ENCODE measurements at regions of chr3 and their contacts with region 1.

Region 1: GRCh38 chr3:11803977-11804892 is 42.5 kb downstream of the TAMM41 start:
- DNase-seq: peak in 11 of 14 experiments; percentile 4 to 75 (median 17)
- ATAC-seq: peak; percentile 91
- H3K4me3 ChIP-seq: no peak overlapping the region
- H3K4me3 Mint-ChIP-seq: no peak overlapping the region
- H3K27ac ChIP-seq: no peak overlapping the region
- H3K27ac Mint-ChIP-seq: no peak overlapping the region
- H3K4me1 ChIP-seq: no peaks in the 10 kb centered on the region
- H3K4me1 Mint-ChIP-seq: peaks cover 10% of the 10 kb centered on the region
- H3K27me3 ChIP-seq: no peaks in the 10 kb centered on the region
- H3K27me3 Mint-ChIP-seq: no peaks in the 10 kb centered on the region
- CTCF ChIP-seq: peak; percentile 74

Region 2: DNA sequence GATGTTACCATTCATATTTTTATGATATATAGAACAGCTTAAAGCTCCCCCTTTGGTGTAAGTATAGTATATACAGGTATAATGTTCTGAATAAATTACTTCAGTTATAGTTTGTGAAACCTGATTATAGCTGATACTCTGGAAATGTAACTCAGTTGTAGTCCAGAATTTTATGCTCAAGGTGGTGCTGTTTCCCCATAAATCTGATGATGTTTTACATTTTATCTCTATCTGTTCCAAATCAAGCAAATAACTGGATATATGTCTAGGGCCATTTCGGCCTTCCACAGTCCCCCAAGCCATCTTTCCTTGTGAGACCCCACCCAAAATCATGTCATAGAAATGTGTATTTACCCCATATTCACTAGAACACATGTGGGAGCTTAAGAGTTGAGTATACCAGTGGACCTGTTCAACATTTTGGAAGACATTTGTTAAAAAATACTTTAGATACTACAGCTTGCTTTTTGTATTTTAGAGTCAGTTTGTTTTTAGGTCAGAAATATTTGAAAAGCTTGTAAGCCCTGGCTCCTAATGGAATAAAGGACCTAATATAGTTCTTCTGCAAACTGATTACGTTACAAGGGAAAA is 424.9 kb before region 1 on chr3:
- CTCF ChIA-PET with region 1: interaction called, 14 read pairs
- POLR2A ChIA-PET with region 1: no interaction called
- intact Hi-C with region 1: loop called (anchors 1 kb)
- DNase-seq: peak in 4 of 14 experiments; percentile 19 to 64 (median 52)
- ATAC-seq: peak; percentile 62
- H3K4me3 ChIP-seq: no peak overlapping the region
- H3K4me3 Mint-ChIP-seq: no peak overlapping the region
- H3K27ac ChIP-seq: no peak overlapping the region
- H3K27ac Mint-ChIP-seq: no peak overlapping the region
- H3K4me1 ChIP-seq: no peaks in the 10 kb centered on the region
- H3K4me1 Mint-ChIP-seq: no peaks in the 10 kb centered on the region
- H3K27me3 ChIP-seq: no peaks in the 10 kb centered on the region
- H3K27me3 Mint-ChIP-seq: no peaks in the 10 kb centered on the region
- CTCF ChIP-seq: peak; percentile 61

Region 3: GRCh38 chr3:11770477-11771391 is 33.5 kb before region 1 on chr3:
- CTCF ChIA-PET with region 1: interaction called, 7 read pairs
- POLR2A ChIA-PET with region 1: no interaction called
- intact Hi-C with region 1: loop called in 1 of 2 experiments (anchors 1 kb)
- DNase-seq: peak; percentile 67 to 95 (median 72)
- ATAC-seq: peak; percentile 99
- H3K4me3 ChIP-seq: peak overlapping the region; percentile 24
- H3K4me3 Mint-ChIP-seq: peak overlapping the region; percentile 2
- H3K27ac ChIP-seq: peak overlapping the region; percentile 52 to 53
- H3K27ac Mint-ChIP-seq: peak overlapping the region; percentile 60
- H3K4me1 ChIP-seq: peaks cover 18% of the 10 kb centered on the region
- H3K4me1 Mint-ChIP-seq: peaks cover 19% of the 10 kb centered on the region
- H3K27me3 ChIP-seq: no peaks in the 10 kb centered on the region
- H3K27me3 Mint-ChIP-seq: no peaks in the 10 kb centered on the region
- CTCF ChIP-seq: no peak

Region 4: DNA sequence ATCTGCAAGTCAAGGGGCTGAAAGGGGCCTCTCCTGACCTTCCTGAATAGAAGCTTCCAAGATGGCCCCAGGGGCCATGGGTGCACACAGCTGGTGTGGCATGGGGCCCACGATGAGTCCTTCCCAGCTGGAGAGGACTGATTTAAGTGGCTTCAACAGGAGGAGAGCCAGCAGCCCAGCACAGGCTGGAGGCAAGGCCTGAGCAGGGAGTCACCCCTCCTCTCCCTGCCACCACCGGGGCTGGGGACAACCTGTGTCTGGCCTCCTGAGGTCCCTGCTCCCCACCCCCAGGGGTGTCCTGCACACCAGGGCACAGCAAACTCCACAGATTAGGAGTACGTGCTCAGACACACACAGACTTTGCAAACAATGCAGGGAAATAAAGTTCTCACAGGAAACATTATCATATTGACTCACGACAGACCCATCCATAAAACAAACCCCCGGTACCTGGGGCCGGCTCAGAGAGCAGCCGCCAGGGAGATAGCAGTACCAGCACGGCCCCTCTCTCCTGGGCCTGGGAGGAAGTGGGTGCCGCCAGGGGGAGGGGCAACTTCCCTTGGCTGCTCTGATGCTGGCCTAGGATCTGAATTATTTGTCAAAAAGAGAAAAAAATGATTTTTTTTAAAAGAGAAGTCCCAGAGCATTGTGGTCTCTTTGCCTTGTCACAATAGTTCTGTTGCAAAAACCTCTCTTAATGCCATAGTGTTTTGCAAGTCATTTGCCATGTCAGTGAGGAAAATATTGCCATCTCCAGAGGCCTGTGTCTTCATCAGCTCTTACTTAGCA is 658.1 kb after region 1 on chr3:
- CTCF ChIA-PET with region 1: no interaction called
- POLR2A ChIA-PET with region 1: no interaction called
- intact Hi-C with region 1: no loop called
- DNase-seq: peak in 6 of 14 experiments; percentile 27 to 53 (median 31)
- ATAC-seq: peak; percentile 71
- H3K4me3 ChIP-seq: no peak overlapping the region
- H3K4me3 Mint-ChIP-seq: peak overlapping the region; percentile 72
- H3K27ac ChIP-seq: peak overlapping the region in 1 of 2 donors; percentile 3
- H3K27ac Mint-ChIP-seq: peak overlapping the region; percentile 69
- H3K4me1 ChIP-seq: peaks cover 11% of the 10 kb centered on the region
- H3K4me1 Mint-ChIP-seq: peaks cover 18% of the 10 kb centered on the region
- H3K27me3 ChIP-seq: no peaks in the 10 kb centered on the region
- H3K27me3 Mint-ChIP-seq: no peaks in the 10 kb centered on the region
- CTCF ChIP-seq: no peak